Activated CD8-positive, alpha-beta T cell treated with anti-CD3 and anti-CD28 coated beads for 36 hours (primary cell): ENCODE measurements at regions of chr4 and their contacts with region 1.

Region 1: DNA sequence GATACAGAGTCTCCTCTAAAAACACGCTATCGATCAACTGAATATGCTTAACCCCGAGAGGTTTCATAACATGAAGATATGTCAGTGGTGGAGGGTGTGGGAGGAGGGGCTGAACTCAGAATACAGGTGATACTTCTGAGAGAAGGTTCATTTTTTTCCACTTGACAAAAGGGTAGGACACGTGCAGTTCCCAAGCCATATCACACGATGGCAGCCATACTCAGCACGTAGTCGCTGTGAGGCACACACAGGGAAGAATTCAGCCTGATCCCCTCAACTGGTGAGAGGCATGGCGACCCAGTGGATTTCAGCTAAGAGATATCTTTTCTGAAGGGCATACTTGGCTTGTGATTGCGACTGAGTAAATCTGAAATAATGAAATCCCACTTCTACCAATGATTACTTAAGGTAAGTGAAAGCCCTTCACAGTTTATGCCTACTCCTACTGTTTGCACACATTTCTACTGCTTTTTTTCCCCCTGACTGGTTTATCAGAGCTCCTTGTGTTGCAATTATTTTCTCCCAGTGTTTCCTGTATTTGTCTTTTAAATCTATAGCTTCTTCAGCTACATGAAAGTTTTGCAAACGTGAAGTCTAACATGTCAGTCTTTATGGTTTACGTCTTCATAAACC is 133.1 kb downstream of the CORIN start:
- DNase-seq: peak; percentile 30
- ATAC-seq: peak; percentile 51
- H3K4me3 Mint-ChIP-seq: no peak overlapping the region
- H3K27ac Mint-ChIP-seq: no peak overlapping the region
- H3K4me1 Mint-ChIP-seq: peaks cover 5% of the 10 kb centered on the region
- H3K27me3 Mint-ChIP-seq: peaks cover 12% of the 10 kb centered on the region
- CTCF ChIP-seq: no peak

Region 2: DNA sequence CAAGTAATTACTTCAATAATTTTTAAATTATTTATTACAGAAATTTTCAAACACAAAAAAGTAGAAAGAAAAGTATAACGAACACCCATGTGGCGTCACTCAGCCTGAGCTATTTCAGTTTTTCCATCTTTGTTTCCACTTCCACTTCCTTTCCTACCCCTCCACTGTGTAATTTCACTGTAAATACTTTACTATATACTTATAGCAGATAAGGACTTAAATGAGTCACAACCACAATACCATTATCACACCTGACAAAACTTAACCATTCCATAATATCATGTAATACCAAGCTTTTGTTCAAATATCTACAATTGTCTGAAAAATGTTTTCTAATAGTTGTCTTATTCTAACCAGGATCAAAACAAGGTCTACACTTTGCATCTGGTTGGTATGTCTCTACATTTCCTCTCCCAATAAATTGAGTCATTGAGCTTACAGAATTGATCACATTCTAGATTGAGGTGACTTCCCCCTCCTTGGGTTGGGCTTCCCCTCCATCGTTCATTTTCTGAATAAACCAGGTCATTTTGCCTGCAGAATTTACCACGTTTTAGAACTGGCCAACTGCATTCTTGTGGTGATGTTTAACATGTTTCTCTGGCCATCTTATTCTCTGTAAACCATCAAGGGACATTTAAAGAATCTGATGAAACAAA is 171.0 kb before region 1 on chr4:
- CTCF ChIA-PET with region 1: no interaction called
- POLR2A ChIA-PET with region 1: no interaction called
- intact Hi-C with region 1: no loop called
- DNase-seq: peak; percentile 45
- ATAC-seq: peak; percentile 57
- H3K4me3 Mint-ChIP-seq: no peak overlapping the region
- H3K27ac Mint-ChIP-seq: peak overlapping the region; percentile 60
- H3K4me1 Mint-ChIP-seq: peaks cover 54% of the 10 kb centered on the region
- H3K27me3 Mint-ChIP-seq: no peaks in the 10 kb centered on the region
- CTCF ChIP-seq: no peak

Region 3: DNA sequence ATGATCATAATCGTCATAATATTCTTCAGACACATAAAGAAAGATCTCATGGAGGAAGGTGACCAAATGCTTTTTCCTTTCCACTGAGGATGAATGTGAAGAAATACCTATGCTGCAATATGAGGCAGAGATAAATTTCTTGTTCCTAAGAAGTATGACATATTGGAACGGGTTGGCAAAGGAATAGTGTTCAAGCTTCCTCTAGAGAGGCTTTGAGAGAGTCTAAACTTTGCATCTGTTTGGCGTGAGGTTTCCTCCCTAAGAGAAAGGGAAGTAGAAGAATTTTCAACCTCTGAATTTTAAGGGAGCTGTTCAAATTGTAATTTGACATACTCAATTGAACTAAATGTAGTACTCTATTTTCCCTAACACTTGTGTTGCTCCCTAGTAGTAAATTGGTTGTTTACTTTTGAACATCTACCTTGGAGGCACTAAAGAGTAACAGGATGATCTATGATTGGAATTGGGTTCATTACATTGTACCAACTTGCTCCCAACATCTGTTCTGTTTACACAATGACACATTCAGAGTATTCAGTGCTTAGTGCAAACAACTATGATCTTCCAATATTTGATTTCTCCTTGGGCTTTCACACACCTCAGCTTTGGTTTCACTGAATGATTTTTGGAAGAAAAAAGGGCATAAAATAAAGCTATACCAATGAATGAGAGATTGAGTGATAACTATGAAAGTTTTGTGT is 11.1 kb after region 1 on chr4:
- CTCF ChIA-PET with region 1: interaction called, 16 read pairs
- POLR2A ChIA-PET with region 1: no interaction called
- intact Hi-C with region 1: no loop called
- DNase-seq: no peak
- ATAC-seq: no peak
- H3K4me3 Mint-ChIP-seq: no peak overlapping the region
- H3K27ac Mint-ChIP-seq: no peak overlapping the region
- H3K4me1 Mint-ChIP-seq: no peaks in the 10 kb centered on the region
- H3K27me3 Mint-ChIP-seq: peaks cover 23% of the 10 kb centered on the region
- CTCF ChIP-seq: no peak

Region 4: GRCh38 chr4:47786958-47787370 is 82.2 kb after region 1 on chr4:
- CTCF ChIA-PET with region 1: no interaction called
- POLR2A ChIA-PET with region 1: no interaction called
- intact Hi-C with region 1: no loop called
- DNase-seq: no peak
- ATAC-seq: no peak
- H3K4me3 Mint-ChIP-seq: no peak overlapping the region
- H3K27ac Mint-ChIP-seq: no peak overlapping the region
- H3K4me1 Mint-ChIP-seq: no peaks in the 10 kb centered on the region
- H3K27me3 Mint-ChIP-seq: peaks cover 1% of the 10 kb centered on the region
- CTCF ChIP-seq: no peak

Region 5: DNA sequence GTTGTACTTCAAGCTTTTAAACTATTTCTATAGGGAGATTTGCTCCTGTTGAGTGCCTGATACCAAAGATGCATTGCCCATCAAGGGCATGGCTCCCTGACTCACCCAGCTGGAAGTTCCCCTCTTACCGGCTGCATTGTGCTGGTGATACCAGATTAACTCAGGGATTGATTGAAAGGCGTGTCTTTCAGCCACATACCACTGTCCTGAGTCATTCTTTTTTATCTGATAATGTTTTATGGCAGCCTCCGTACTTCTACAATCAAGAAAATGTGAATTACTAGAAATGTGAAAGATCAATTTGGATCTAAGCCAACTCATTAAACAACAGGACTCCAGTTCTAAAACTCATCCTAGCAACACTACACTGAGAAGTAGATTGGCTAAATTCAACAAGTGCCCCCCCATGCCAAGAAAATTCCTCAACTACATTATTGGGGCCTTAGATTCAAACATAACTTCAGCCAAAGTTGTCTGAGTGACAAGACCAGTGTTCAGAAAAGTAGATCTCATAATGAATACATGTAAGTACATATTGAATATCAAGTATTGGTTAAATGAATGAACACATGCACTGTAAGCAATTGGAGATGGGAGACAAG is 389.2 kb after region 1 on chr4:
- CTCF ChIA-PET with region 1: no interaction called
- POLR2A ChIA-PET with region 1: no interaction called
- intact Hi-C with region 1: no loop called
- DNase-seq: peak; percentile 71
- ATAC-seq: peak; percentile 99
- H3K4me3 Mint-ChIP-seq: no peak overlapping the region
- H3K27ac Mint-ChIP-seq: peak overlapping the region; percentile 65
- H3K4me1 Mint-ChIP-seq: peaks cover 26% of the 10 kb centered on the region
- H3K27me3 Mint-ChIP-seq: no peaks in the 10 kb centered on the region
- CTCF ChIP-seq: no peak